ENCODE measurements at regions of chr1 and their contacts with region 1.

Region 1: DNA sequence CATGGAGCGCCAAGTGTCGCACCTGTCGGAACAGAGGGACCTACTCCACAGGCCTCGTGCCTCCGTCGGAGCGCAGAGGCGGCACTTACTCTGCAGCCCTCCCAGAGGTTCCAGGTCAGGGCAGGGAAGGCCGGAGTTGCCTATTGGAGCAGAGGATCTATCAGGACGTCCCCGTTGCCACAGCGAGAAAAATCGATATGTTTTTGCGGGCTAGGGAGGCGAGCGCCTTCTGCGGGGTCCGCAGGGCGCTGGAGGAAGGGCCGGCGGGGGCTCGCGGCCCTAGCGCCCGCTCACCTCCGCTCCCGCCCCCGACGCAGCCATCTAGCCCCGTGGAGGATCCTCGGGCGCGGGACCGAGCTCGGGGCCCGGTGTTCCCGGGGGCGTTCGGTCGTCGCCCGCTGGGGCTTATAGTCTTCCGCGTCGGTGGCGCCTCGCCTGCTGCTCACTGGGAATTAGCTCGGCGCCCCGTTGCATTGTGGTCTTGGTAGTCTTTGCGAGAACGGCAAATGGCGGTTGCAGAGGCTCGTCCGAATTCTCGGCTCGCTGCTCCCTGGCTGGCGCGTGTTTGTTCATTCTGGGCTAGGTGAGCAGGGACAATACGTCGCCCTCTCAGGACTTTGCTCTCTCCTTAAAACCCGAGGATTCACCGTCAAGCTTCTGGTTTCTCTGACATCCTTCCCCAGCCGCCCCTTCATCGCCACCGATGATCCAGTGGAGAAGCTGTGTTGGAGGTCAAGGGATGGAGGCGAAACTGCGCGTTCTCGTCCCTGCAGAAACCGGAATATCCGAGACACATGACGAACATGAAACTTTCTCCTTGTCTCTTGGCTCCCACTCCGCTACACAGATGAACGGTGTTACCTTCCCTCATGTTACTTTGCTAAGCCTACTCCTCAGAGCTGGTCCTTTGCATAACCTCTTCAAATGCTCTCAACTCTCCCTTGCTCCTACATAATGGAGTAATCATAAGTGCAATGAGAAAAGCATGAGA is at the start of gene JTB:
- DNase-seq: peak; percentile 94
- ATAC-seq: peak; percentile 97
- total RNA-seq, gene JTB: 89.6 to 102 TPM

Region 2: DNA sequence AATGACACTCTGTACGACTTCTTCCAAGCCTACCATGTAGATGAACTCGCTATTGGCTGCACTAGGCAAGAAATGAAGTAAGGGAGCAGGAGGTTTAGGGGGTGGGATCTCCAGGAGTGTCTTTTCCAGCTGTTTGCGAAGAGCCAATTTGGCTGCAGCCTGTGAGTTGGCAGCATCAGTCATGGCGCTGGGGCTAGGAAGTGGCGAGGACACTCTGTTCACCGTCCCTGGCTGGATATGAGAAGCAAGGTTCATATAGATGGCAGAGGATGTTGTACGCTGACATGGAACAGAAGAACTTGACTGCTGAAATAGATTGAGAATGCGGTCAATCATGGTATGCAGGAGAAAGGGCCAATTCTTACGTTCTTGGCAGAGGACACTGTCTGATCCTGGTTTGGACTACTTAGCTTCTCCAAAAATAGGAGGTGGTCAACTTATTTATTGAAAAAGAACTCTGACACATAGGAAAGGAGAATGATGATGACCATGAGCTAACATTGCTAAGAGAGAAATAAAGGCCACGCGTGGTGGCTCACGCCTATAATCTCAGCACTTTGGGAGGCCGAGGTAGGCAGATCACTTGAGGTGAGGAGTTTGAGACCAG is 161.2 kb before region 1 on chr1:
- intact Hi-C with region 1: loop called in 1 of 2 experiments (anchors 5 kb)
- DNase-seq: no peak
- ATAC-seq: peak; percentile 34 to 45

Measured in left cardiac atrium (tissue), 4 donors.